ENCODE measurements at regions of chr9 and their contacts with region 1.

Region 1: GRCh38 chr9:114434878-114435311 is 47.1 kb upstream of the AKNA start:
- DNase-seq: no peak
- H3K4me3 ChIP-seq: no peak overlapping the region
- H3K27me3 ChIP-seq: peaks cover 3% of the 10 kb centered on the region; the same call in 1 of the 2 replicates
- CTCF ChIP-seq: peak; percentile 67

Region 2: GRCh38 chr9:114016629-114017420 is 418.1 kb before region 1 on chr9:
- CTCF ChIA-PET with region 1: no interaction called
- POLR2A ChIA-PET with region 1: no interaction called
- DNase-seq: no peak
- H3K4me3 ChIP-seq: no peak overlapping the region
- H3K27me3 ChIP-seq: no peaks in the 10 kb centered on the region
- CTCF ChIP-seq: no peak

Region 3: DNA sequence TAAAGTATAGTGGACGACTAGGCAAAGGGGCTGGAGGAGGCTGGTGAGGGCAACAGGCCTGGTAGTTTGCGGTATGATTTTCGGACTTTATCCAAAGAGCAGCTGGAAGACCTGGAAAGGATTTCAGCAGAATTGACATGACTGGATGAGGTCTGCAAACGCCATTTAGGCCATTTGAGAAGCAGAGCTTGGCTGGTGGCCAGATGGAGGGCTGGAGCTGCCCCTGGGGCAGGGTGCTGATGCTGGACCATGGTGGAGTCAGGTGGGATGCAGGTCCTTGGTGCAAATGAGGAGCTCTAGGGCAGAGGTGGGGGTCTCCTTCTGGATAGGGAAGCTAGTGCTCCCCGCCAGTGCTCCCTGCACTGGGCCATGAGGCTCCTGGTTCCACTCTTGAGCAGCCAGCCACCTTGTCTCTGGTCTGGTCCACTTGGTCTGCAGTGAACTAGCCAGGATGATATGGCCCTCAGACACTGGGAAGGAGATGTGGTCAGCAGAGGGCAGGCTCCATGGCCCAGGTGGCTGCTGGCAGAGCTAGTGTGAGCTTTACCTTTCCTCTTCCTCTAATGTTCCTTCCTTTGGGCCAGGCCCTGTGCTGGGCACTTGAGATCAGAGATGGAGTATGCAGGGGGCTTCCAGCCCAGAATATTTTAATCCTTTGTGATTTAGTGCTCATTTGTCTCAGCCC is 248.1 kb before region 1 on chr9:
- CTCF ChIA-PET with region 1: no interaction called
- POLR2A ChIA-PET with region 1: no interaction called
- DNase-seq: no peak
- H3K4me3 ChIP-seq: no peak overlapping the region
- H3K27me3 ChIP-seq: no peaks in the 10 kb centered on the region
- CTCF ChIP-seq: no peak

Region 4: DNA sequence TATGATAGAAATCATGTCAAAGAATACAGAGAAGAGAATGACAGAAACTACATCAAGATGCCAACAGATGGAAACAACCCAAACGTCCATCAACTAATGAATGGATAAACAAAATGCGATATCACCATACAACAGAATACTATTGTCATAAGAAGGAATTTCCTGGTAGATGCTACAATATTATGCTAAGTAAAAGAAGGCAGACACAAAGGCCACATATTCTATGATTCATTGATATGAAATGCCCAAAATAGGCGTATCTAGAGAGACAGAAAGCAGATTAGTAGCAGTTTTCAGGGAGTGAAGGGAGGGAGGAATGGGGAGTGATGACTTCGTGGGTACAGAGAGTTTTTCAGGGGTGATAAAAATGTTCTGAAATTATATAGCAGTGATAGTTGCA is 11.1 kb after region 1 on chr9:
- CTCF ChIA-PET with region 1: interaction called, 16 read pairs
- POLR2A ChIA-PET with region 1: no interaction called
- DNase-seq: peak; percentile 16
- H3K4me3 ChIP-seq: no peak overlapping the region
- H3K27me3 ChIP-seq: no peaks in the 10 kb centered on the region
- CTCF ChIP-seq: no peak

Region 5: GRCh38 chr9:114450833-114451706 is 16.2 kb after region 1 on chr9:
- CTCF ChIA-PET with region 1: interaction called, 16 read pairs
- POLR2A ChIA-PET with region 1: no interaction called
- DNase-seq: no peak
- H3K4me3 ChIP-seq: no peak overlapping the region
- H3K27me3 ChIP-seq: peaks cover 2% of the 10 kb centered on the region; the same call in 1 of the 2 replicates
- CTCF ChIP-seq: no peak

Region 6: DNA sequence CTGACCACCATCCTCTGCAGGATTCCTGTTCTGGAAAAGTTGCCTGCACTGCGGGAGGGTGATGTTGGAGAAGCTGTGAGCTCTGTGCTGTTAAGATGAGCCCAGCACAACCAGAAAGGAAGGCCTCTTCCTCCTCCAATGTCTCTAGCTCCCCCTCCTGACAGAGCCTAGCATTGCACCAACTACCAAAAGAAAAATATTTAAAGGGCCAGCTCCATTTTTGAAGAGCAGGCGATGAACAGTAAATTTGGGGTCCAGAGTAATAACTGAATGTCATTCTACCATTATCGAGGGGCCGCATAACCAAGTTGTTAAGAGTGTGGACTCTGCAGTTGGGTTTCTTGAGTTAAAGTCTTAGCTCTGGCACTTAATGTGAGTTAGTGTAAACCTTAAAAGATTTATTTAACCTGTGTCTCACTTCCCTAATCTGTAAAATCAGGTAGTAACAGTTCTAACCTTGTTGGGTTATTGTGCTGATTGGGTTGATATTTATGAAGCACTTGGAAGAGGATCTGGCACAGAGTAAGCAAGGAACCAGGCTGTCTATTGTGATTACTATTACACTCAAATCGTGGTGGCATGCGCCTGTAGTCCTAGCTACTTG is 218.8 kb after region 1 on chr9:
- CTCF ChIA-PET with region 1: interaction called, 89 read pairs
- POLR2A ChIA-PET with region 1: no interaction called
- DNase-seq: peak; percentile 25
- H3K4me3 ChIP-seq: no peak overlapping the region
- H3K27me3 ChIP-seq: no peaks in the 10 kb centered on the region
- CTCF ChIP-seq: peak; percentile 96

Measured in BJ (cell line).